Activated T-helper 1 cell treated with anti-CD3 and anti-CD28 coated beads, Interleukin-12 subunit alpha, Interleukin-12 subunit beta, Interleukin-2, Interleukin-4 antibody, amounts not matched to agents 30 ng/mL and 10 ng/mL and 1 ng/mL, durations not matched to agents 14 hours and 24 hours and 36 hours (primary cell): ENCODE measurements at regions of chr7 and their contacts with region 1.

Region 1: GRCh38 chr7:141014524-141015395 is at the start of gene MRPS33:
- DNase-seq: peak; percentile 94
- H3K4me3 Mint-ChIP-seq: peak within 1 kb of the TSS; percentile 92
- H3K27ac Mint-ChIP-seq: peak within 1 kb of the TSS; percentile 98
- H3K4me1 Mint-ChIP-seq: peaks cover 40% of the 10 kb centered on the region
- H3K27me3 Mint-ChIP-seq: peaks cover 14% of the 10 kb centered on the region
- total RNA-seq, gene MRPS33: 63.0 and 73.9 TPM in 2 replicates

Region 2: DNA sequence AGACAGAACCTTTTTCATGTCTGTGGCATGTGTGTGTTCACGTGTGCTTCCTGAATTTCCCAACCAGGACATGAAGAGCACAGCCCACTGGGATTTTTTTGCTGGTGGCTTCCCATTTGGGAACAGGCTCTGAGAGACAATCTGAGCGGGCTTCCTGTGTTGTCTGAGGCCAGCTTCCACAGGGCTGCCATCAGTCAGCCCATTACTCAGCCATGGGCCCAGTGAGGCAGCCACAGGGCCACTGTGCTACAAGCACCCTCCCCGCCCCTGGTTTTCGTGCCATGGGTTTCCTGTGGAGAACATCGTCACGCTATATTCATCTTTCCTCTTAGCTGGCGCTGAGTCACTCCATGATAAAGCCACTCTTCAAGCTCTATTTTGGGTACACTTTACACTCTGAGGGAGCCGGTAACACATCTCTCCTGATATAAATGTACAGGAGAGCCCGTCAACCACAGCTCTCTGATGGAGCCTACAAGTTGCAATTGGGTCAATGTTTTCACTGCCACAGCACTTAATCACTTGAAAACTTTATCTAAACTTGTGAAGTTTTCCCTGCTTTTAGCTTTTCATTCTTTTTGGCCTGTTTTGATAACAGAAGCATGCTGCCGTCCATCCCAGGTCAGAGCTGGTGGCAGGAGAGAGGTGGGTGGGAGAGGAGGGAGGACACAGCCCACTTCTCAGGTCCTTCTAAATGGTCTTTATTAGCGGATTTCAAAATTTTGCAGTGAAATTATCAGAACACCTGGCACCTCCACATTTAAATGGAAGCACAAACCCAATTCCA is 1333.9 kb before region 1 on chr7:
- intact Hi-C with region 1: loop called (anchors 5 kb)
- DNase-seq: peak; percentile 65
- H3K4me3 Mint-ChIP-seq: peak overlapping the region; percentile 74
- H3K27ac Mint-ChIP-seq: peak overlapping the region; percentile 85
- H3K4me1 Mint-ChIP-seq: peaks cover 61% of the 10 kb centered on the region
- H3K27me3 Mint-ChIP-seq: no peaks in the 10 kb centered on the region

Region 3: DNA sequence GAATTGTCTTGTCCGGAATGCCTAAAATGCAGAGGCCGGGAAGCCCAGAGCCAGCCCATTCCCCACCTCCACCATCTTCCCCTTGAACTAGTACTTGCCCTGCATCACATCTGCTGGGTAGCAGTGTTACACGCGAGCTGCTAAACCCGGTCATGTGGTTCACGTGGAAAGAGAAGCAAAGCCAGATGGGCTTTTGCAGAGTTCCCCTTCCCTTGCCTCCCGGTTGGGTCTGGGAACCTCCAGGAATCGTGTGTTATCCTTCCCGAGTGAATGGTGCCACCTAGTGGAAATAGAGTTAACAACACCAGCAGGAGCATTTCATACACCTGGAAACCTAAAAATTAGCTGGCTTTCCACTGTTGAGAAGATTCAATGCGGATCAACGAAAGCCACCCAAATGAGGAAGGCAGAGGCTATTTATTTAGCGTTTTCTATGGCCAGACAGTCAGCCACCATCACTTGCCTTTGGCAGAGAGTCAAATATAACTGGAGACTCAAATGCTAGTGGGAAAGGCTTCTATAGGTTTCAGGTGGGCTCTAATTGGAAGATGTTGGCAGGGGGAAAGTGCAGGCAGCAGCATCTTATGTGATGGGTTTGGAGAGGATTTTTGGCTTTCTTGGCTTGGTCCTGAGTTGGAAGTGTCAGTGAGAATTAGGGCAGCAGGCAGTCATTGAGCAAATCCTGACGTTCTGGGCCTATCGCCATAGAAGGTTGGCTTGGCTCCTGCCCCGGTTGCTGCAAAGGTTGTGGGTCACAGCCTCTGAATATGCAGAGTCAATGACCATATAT is 361.2 kb before region 1 on chr7:
- intact Hi-C with region 1: loop called (anchors 5 kb)
- DNase-seq: no peak
- H3K4me3 Mint-ChIP-seq: no peak overlapping the region
- H3K27ac Mint-ChIP-seq: no peak overlapping the region
- H3K4me1 Mint-ChIP-seq: peaks cover 21% of the 10 kb centered on the region
- H3K27me3 Mint-ChIP-seq: peaks cover 49% of the 10 kb centered on the region

Region 4: GRCh38 chr7:140810830-140811556 is 203.8 kb before region 1 on chr7:
- intact Hi-C with region 1: loop called (anchors 1 kb)
- DNase-seq: peak; percentile 53
- H3K4me3 Mint-ChIP-seq: no peak overlapping the region
- H3K27ac Mint-ChIP-seq: no peak overlapping the region
- H3K4me1 Mint-ChIP-seq: no peaks in the 10 kb centered on the region
- H3K27me3 Mint-ChIP-seq: peaks cover 2% of the 10 kb centered on the region

Region 5: DNA sequence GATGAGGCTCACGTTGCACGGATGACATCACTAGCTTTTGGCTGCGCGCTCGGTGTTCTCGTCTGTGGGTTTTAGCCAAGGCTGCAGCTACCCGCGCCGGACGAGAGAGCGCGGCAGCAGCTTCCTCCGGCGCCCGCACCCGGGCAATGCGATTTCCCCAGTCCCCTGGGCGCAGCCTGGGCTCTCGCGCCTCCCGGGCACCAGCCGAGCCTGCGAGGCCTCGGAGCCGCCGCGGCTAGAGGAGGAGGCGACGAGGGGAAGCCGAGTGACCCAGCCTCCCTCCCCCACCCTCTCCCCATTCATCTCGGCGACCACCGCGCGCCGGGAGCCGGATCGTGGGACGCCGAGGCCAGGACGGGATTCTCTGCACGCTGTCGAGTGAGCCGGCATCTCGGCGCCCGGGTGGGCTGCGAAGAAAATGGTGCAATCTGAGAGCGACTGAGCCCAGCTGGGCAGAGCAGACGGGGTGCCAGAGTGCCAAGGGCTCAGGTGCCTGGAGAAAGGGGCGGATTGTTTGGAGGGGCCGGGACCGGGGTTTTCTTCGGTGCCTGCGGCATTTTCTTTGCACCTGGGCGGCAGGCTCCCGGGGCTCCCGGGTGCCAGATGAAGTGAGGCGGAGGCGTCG is 57.9 kb after region 1 on chr7:
- intact Hi-C with region 1: loop called (anchors 1 kb)
- DNase-seq: peak; percentile 40
- H3K4me3 Mint-ChIP-seq: peak overlapping the region; percentile 79
- H3K27ac Mint-ChIP-seq: no peak overlapping the region
- H3K4me1 Mint-ChIP-seq: peaks cover 36% of the 10 kb centered on the region
- H3K27me3 Mint-ChIP-seq: peaks cover 39% of the 10 kb centered on the region

Region 6: DNA sequence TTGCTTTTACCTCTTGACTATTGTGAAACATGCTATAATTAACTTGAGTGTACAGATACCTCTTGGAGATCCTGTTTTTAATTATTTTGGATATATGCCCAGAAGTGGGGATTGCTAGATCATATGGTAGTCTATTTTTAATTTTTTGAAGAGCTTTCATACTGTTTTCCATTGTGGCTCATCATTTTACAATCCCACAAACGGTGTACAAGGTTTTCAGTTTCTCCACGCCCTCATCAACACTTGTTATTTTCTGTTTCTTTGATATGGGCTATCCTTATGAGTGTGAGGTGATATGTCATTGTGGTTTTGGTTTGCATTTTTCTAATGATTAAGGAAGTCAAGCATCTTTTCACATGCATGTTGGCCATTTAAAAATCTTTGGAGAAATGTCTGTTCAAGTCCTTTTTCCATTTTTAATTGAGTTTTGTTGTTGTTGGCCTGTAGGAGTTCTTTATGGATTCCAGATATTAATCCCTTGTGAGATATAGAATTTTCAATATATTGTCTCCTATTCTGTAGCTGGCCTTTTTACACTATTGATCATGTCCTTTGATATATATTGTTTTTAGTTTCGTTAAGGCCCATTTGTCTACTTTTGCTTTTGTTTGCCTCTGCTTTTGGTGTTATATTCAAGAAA is 543.9 kb after region 1 on chr7:
- intact Hi-C with region 1: loop called (anchors 2 kb)
- DNase-seq: peak; percentile 31
- H3K4me3 Mint-ChIP-seq: peak overlapping the region; percentile 60
- H3K27ac Mint-ChIP-seq: peak overlapping the region; percentile 94
- H3K4me1 Mint-ChIP-seq: peaks cover 83% of the 10 kb centered on the region
- H3K27me3 Mint-ChIP-seq: no peaks in the 10 kb centered on the region

Region 7: GRCh38 chr7:142685877-142686508 is 1671.2 kb after region 1 on chr7:
- intact Hi-C with region 1: no loop called
- DNase-seq: no peak
- H3K4me3 Mint-ChIP-seq: no peak overlapping the region
- H3K27ac Mint-ChIP-seq: no peak overlapping the region
- H3K4me1 Mint-ChIP-seq: peaks cover 22% of the 10 kb centered on the region
- H3K27me3 Mint-ChIP-seq: peaks cover 7% of the 10 kb centered on the region